Right ventricle myocardium superior (tissue), 1 donor: ENCODE measurements at regions of chr15 and their contacts with region 1.

Region 1: GRCh38 chr15:98421419-98422129 is 226.8 kb upstream of the IGF1R start:
- DNase-seq: peak; percentile 86
- ATAC-seq: peak; percentile 92

Region 2: GRCh38 chr15:98311566-98312188 is 109.9 kb before region 1 on chr15:
- intact Hi-C with region 1: loop called (anchors 2 kb)
- DNase-seq: peak; percentile 75
- ATAC-seq: peak; percentile 56